Caco-2 (cell line): ENCODE measurements at regions of chr5 and their contacts with region 1.

Region 1: GRCh38 chr5:132301344-132302271 is 7.4 kb downstream of the SLC22A4 start:
- DNase-seq: no peak
- H3K4me3 ChIP-seq: no peak overlapping the region
- H3K4me3 Mint-ChIP-seq: no peak overlapping the region
- H3K27ac Mint-ChIP-seq: no peak overlapping the region
- H3K4me1 ChIP-seq: peaks cover 18% of the 10 kb centered on the region
- H3K4me1 Mint-ChIP-seq: peaks cover 12% of the 10 kb centered on the region
- H3K27me3 ChIP-seq: no peaks in the 10 kb centered on the region
- H3K27me3 Mint-ChIP-seq: no peaks in the 10 kb centered on the region
- CTCF ChIP-seq: no peak

Region 2: DNA sequence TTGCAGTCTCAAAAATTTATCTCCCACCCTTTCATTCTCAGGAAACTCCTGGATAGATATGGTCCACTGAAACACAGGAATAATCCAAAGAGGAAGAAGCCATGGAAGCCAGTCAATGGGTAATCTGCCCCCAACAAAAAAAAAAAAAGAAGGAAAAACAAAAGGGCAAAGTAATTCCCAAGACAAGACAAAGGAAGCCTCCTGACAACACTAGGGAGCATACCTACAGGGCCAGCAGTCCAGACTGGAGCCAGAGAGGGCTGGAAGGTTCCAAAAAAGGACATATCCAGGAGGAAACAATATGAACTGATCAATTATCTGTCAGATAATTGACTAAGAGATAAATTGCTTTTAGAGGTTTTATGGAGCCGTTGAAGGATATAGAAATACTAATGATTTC is 517.7 kb before region 1 on chr5:
- CTCF ChIA-PET with region 1: no interaction called
- POLR2A ChIA-PET with region 1: no interaction called
- intact Hi-C with region 1: loop called (anchors 5 kb)
- DNase-seq: no peak
- H3K4me3 ChIP-seq: no peak overlapping the region
- H3K4me3 Mint-ChIP-seq: no peak overlapping the region
- H3K27ac Mint-ChIP-seq: no peak overlapping the region
- H3K4me1 ChIP-seq: peaks cover 12% of the 10 kb centered on the region
- H3K4me1 Mint-ChIP-seq: peaks cover 7% of the 10 kb centered on the region
- H3K27me3 ChIP-seq: no peaks in the 10 kb centered on the region
- H3K27me3 Mint-ChIP-seq: no peaks in the 10 kb centered on the region
- CTCF ChIP-seq: no peak

Region 3: DNA sequence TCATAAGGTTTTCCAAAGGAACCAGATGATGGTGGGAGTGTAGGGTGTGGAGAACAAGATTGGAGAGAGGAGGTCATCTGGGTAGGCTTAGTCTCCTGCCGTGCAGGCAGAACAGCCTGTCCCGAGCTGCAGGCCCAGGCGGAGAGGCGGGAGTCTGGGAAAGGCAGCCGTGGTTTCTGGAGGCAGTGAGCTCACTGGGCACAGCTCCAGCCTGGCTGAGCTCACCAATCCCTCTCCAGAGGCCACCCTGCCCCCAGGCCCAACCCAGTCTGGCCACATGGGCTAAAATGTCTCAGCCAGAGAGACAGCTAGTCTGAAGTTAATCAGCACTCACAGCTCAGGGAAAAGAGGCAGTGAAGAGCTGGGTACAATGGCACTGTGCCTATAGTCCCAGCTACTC is 86.3 kb before region 1 on chr5:
- CTCF ChIA-PET with region 1: no interaction called
- POLR2A ChIA-PET with region 1: no interaction called
- intact Hi-C with region 1: no loop called
- DNase-seq: no peak
- H3K4me3 ChIP-seq: no peak overlapping the region
- H3K4me3 Mint-ChIP-seq: no peak overlapping the region
- H3K27ac Mint-ChIP-seq: no peak overlapping the region
- H3K4me1 ChIP-seq: no peaks in the 10 kb centered on the region
- H3K4me1 Mint-ChIP-seq: no peaks in the 10 kb centered on the region
- H3K27me3 ChIP-seq: no peaks in the 10 kb centered on the region
- H3K27me3 Mint-ChIP-seq: no peaks in the 10 kb centered on the region
- CTCF ChIP-seq: no peak

Region 4: GRCh38 chr5:132227485-132228240 is 73.9 kb before region 1 on chr5 and contains the start of gene P4HA2:
- CTCF ChIA-PET with region 1: no interaction called
- POLR2A ChIA-PET with region 1: no interaction called
- intact Hi-C with region 1: no loop called
- DNase-seq: peak; percentile 89 to 91
- H3K4me3 ChIP-seq: peak within 1 kb of the TSS; percentile 59
- H3K4me3 Mint-ChIP-seq: peak within 1 kb of the TSS; percentile 77
- H3K27ac Mint-ChIP-seq: peak within 1 kb of the TSS; percentile 44
- H3K4me1 ChIP-seq: peaks cover 5% of the 10 kb centered on the region; the same call in 1 of the 2 replicates
- H3K4me1 Mint-ChIP-seq: peaks cover 5% of the 10 kb centered on the region
- H3K27me3 ChIP-seq: no peaks in the 10 kb centered on the region
- H3K27me3 Mint-ChIP-seq: no peaks in the 10 kb centered on the region
- CTCF ChIP-seq: peak in 1 of 2 experiments; percentile 10
- total RNA-seq, gene P4HA2: 41.0 and 42.3 TPM in 2 replicates